ENCODE measurements at regions of chr6 and their contacts with region 1.

Region 1: DNA sequence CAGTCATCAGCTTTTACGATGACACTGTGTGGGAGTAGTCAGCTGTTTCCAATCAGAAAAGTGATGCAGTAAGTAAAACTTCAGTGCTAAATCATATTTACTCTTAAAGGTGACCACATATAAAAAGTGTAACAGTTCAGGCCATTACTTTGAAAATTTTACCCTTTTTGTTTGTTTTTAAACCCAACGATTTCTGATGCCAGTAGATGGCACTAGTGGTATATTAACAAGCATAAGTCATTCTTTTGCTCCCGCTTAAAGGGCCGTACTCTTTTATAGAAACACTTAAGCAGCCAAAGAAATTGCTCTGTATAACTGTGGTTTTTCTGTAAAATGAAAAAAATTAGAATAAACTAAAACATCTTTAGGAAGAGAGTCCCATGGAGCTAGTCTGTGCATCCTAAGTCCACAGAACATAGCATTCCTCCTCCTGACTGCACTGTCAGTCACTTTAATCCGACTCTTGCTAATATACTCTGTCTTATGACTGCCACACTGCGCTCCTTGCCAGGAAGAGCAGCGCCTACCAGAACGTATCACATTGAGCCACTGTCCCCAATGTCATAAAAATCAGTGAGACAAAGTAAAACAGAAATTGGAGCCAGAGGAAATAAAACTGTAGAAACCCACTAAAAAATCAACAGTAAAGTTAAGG is 25.0 kb downstream of the HEBP2 start:
- DNase-seq: no peak
- H3K4me3 Mint-ChIP-seq: no peak overlapping the region
- H3K27ac Mint-ChIP-seq: no peak overlapping the region
- H3K4me1 Mint-ChIP-seq: peaks cover 5% of the 10 kb centered on the region
- H3K27me3 Mint-ChIP-seq: peaks cover 1% of the 10 kb centered on the region

Region 2: DNA sequence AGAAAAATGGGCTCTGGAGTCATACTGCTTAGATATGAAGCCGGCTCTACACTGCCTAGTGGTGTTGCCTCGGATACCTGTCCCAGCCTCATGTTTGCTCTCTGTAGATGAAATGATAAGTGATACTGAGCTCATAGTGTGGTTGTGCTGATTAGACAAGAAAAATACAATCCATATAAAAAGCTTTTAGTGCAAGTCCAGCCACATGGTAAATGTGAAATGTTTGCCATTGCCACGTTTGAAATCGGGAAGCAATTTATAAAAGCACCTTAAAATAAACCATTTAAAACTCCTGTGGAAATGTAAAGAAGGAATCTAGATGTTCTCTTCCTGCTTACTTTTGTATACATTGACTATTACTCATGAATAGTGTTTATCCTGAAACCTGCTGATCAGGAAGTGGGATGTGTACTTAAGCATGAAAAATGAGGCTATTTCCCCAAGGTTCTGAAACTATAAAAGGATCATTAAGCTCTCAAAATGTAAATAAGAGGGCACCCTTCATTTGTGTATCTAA is 197.6 kb before region 1 on chr6:
- intact Hi-C with region 1: no loop called
- DNase-seq: no peak
- H3K4me3 Mint-ChIP-seq: no peak overlapping the region
- H3K27ac Mint-ChIP-seq: no peak overlapping the region
- H3K4me1 Mint-ChIP-seq: no peaks in the 10 kb centered on the region
- H3K27me3 Mint-ChIP-seq: no peaks in the 10 kb centered on the region

Region 3: DNA sequence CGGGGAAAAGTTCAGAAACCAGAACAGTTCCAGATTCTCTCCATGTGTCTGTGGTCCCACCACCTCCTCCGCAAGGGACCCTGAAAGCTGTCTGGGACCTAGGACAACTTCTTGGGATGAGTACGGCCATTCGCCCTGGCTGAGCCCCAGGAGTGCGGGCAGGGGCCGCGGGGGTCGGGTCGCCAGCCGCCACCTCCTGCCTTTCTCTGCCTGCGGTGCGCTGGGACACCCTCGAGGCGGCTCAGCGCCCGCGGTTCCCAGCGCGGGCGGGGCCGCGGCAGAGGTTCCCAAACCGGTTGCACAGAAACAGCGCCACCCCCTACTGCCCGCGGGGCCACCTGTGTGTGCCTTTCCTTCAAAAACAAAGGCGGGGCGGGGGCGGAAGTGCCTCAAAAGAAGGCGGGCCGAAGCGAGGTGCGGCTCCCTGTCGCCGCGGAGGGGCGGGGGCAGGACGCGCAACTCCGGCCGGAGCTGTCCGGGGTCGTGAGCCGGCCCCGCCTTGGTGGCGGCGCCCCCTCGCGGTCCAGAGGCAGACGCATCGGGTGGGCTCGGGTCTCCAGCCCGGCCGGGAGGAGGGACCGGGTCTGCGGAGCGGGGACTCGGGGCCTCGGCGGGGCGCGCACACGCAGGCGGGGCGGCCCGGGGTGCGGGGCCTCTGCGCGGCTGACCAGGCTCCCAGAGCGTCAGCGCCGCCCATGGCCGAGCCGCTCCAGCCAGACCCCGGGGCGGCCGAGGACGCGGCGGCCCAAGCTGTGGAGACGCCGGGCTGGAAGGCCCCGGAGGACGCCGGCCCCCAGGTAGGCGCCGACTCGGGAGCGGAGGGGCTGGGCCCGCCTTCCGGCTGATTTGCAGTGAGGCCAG is 25.0 kb before region 1 on chr6 and contains the start of gene HEBP2:
- intact Hi-C with region 1: no loop called
- DNase-seq: peak; percentile 87
- H3K4me3 Mint-ChIP-seq: peak within 1 kb of the TSS; percentile 84
- H3K27ac Mint-ChIP-seq: peak within 1 kb of the TSS; percentile 59
- H3K4me1 Mint-ChIP-seq: peaks cover 18% of the 10 kb centered on the region
- H3K27me3 Mint-ChIP-seq: peaks cover 8% of the 10 kb centered on the region
- total RNA-seq, gene HEBP2: 18.9 and 21.4 TPM in 2 replicates

Region 4: DNA sequence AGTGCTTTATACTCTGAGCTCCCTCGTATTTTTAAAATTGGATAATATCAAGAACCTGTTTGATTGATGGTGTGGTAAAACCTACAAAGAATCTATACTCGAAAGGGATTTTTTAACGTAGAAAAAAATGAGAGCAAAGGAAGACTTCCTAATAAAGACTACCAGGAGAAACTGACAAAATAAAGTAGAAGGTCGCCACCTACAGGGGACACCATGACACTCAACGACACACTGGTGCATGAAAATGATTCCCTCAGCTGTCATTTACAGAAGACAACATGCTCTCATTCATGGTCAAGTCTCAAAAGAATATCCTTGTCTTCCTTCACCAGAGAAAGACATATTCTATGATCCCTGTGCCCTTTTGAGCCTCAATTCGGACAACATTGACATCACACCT is 80.3 kb after region 1 on chr6:
- intact Hi-C with region 1: loop called (anchors 1 kb)
- DNase-seq: peak; percentile 17
- H3K4me3 Mint-ChIP-seq: no peak overlapping the region
- H3K27ac Mint-ChIP-seq: no peak overlapping the region
- H3K4me1 Mint-ChIP-seq: peaks cover 7% of the 10 kb centered on the region
- H3K27me3 Mint-ChIP-seq: peaks cover 14% of the 10 kb centered on the region

Region 5: GRCh38 chr6:138765896-138766655 is 337.0 kb after region 1 on chr6:
- intact Hi-C with region 1: loop called (anchors 1 kb)
- DNase-seq: no peak
- H3K4me3 Mint-ChIP-seq: no peak overlapping the region
- H3K27ac Mint-ChIP-seq: no peak overlapping the region
- H3K4me1 Mint-ChIP-seq: peaks cover 9% of the 10 kb centered on the region
- H3K27me3 Mint-ChIP-seq: no peaks in the 10 kb centered on the region